Activated CD4-positive, alpha-beta T cell treated with anti-CD3 and anti-CD28 coated beads, Interleukin-2, amount 10 ng/mL, durations not matched to agents 24 days and 14 days (primary cell): ENCODE measurements at regions of chr3 and their contacts with region 1.

Region 1: DNA sequence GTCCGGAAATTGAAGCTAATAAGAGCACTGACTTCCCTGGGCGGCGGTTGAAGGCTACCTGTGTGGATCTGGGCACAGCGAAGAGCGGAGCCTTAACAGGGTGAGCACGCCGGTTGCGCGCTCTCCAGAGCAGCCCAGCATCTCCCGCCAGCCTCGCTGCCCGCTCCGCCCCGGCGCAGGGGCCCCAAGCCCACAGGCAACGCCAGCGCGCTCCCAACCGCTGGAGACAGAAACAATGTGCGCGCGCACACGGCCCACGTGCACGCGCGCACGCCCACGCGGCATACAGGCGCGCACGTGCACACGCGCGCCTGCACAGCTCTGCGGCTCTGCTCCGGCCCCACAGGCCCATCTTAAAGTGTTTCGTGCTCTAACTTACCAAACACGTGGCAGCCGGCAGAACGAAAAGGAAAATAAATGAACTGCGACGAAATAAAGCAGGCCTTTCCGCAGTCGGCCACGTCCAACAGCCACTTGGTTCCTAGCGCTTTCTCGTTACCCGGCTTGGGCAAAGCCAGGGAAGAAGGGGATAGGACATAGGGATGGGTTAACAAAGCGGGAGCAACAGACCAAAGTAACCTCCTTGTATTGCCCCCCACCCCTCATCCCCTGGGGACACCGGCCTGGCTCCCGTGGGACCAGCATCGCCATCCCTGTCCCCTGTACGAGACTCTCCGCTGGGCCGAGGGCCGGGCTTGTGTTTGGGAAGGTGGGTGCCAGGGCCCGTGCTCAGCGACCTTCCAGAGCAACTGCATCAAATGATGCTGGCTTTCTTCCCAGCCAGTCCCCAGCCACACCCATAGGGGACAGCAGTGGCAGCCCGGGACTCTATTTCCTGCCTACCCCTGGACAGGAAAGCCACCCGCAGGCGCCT is 203.7 kb downstream of the ABHD5 start:
- DNase-seq: peak; percentile 59
- H3K4me3 Mint-ChIP-seq: peak overlapping the region; percentile 74
- H3K27ac Mint-ChIP-seq: peak overlapping the region; percentile 45
- H3K4me1 Mint-ChIP-seq: peaks cover 3% of the 10 kb centered on the region
- H3K27me3 Mint-ChIP-seq: peaks cover 49% of the 10 kb centered on the region

Region 2: DNA sequence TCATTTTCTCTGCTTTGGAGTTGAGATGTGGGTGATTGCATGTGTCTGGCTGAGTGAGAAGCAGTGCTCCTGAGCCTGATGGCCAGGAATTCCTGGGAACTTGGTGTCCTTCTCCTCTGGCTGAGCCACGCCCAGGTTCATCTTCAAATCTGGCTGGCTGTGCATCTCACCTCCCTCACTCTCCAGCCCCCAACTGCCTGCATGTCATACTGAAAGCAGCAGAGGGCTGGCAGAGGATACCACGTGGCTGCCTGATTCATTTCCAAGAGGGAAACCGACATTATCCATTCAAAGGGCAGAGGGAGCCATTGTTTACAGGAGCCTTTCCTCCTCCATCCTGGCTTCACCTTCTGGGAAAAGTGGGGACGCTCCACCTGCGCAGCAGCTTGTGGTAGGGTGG is 146.2 kb before region 1 on chr3:
- intact Hi-C with region 1: no loop called
- DNase-seq: no peak
- H3K4me3 Mint-ChIP-seq: no peak overlapping the region
- H3K27ac Mint-ChIP-seq: no peak overlapping the region
- H3K4me1 Mint-ChIP-seq: no peaks in the 10 kb centered on the region
- H3K27me3 Mint-ChIP-seq: peaks cover 11% of the 10 kb centered on the region

Region 3: DNA sequence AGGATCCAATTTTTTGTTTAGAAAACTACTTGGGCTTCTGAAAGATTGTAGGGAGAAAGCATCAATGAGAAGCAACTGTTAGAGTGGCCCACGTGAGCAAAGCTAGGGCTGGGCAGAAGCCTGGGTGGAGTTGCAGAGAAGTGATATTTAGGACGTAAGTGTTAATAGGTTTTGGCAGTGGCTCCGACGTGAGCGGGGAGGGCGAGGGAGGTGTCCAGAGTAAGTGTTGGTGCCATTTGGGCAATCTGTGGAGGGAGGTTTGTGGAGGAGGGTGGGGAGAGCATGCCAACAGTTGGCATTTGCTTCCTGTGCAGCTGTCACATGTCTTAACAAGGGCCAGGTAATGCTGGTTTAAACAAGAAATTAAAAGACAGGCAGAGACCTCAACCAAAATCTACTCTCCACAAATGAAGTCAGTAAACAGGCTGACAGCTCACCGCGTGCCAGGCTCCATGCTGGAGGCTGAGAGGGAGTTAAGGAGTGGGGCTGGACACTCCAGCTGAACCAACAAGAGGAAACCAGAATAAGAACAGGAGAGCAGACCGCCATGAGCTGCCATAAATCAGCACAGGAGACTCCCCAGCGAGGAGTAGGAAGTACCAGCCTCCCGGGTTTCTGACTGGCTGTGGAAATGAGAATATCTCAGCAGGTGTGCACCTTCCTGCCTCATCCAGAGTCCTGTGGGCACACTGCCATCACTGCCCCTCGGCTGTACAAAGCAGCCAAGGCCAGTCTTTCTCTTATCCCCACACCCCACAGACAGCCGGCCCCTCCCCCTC is 28.9 kb after region 1 on chr3:
- intact Hi-C with region 1: no loop called
- DNase-seq: no peak
- H3K4me3 Mint-ChIP-seq: no peak overlapping the region
- H3K27ac Mint-ChIP-seq: no peak overlapping the region
- H3K4me1 Mint-ChIP-seq: no peaks in the 10 kb centered on the region
- H3K27me3 Mint-ChIP-seq: peaks cover 30% of the 10 kb centered on the region

Region 4: DNA sequence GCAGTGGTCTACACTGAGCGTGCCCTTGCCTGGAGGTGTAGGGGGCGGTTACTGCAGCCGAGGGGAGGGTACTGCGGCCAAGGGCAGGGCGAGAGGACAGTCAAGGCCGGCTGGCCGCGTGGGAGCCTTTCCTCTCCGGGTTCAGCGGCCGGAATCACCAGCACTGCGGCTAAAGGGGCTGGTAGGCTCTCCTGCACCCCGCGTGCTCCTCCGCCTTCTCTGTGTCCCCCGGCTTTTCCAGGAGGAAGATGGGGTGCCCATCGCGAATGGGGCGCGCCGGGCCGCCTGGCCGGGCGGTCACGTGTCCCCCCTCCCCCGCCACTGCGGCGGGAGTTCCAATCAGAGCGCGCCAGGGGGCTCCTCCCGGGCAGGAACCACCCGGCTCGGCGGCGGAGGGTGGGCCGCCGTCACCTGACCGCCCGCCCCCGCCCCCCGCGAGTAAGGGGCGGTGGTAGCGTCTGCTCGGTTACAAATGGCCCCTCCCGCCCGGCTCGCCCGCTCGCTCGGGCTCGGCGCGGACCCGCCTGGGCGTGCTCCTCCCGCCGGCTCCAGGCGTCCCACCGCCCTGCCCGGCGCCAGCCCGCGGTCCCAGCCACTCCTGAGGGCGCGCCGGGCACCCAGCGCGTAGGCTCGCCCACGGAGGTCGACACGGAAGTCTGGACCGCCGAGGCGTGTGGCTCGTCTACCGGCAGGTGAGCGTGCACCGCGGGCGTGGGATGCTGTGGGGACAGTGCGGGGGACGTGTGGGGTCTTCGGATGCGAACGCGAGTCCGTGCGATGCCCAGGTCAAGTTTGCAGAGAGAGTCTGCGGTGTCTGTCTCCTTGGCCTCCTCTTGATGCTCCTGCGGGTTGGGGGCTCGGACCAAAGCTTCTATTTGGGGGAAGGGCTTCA is 104.7 kb after region 1 on chr3:
- intact Hi-C with region 1: loop called (anchors 5 kb)
- DNase-seq: no peak
- H3K4me3 Mint-ChIP-seq: peak overlapping the region; percentile 76
- H3K27ac Mint-ChIP-seq: no peak overlapping the region
- H3K4me1 Mint-ChIP-seq: peaks cover 34% of the 10 kb centered on the region
- H3K27me3 Mint-ChIP-seq: peaks cover 80% of the 10 kb centered on the region